B cell (primary cell): ENCODE measurements at regions of chr11 and their contacts with region 1.

Region 1: DNA sequence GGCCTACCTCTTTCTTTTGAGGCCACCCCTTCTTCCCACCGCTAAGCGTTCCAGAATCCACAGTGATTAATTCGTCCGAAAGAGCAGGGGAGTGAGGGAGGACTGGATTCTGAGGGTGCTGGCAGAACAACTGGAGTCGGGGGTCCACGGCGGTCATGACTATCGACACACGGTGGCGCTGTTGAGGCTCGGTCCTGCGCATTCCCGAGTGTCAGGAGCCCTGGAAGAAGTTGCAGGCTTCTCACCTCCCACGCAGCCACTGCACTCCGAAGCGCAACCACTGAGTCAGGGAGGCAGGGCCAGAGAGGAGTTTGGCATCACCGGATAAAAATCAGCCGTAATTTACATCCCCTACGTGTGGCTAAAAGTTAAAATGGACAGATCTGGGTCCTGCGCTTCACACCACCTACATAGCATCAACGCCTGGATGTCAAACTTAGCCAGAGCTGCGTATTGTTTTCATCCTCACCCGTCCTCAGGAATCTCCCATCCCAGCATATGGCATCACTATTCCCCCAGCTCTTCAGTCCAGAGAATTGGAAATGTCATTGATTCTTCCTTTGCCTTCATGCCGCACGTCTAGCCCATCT is 10.7 kb upstream of the CTSF start:
- DNase-seq: peak; percentile 85
- ATAC-seq: peak; percentile 91
- H3K4me3 ChIP-seq: peak overlapping the region in 2 of 5 experiments; percentile 1 to 12
- H3K4me3 Mint-ChIP-seq: peak overlapping the region; percentile 18
- H3K27ac ChIP-seq: no peak overlapping the region
- H3K27ac Mint-ChIP-seq: no peak overlapping the region
- H3K4me1 ChIP-seq: peaks cover 3 to 7% of the 10 kb centered on the region in 2 donors
- H3K4me1 Mint-ChIP-seq: peaks cover 8% of the 10 kb centered on the region
- H3K27me3 ChIP-seq: no peaks in the 10 kb centered on the region
- H3K27me3 Mint-ChIP-seq: peaks cover 24% of the 10 kb centered on the region
- CTCF ChIP-seq: peak; percentile 84

Region 2: GRCh38 chr11:66467028-66467659 is 112.0 kb before region 1 on chr11:
- CTCF ChIA-PET with region 1: no interaction called
- POLR2A ChIA-PET with region 1: no interaction called
- intact Hi-C with region 1: no loop called
- DNase-seq: no peak
- ATAC-seq: peak; percentile 26
- H3K4me3 ChIP-seq: peak overlapping the region; percentile 19 to 82 (median 63)
- H3K4me3 Mint-ChIP-seq: peak overlapping the region; percentile 90
- H3K27ac ChIP-seq: peak overlapping the region in 1 of 2 donors; percentile 39
- H3K27ac Mint-ChIP-seq: peak overlapping the region; percentile 59
- H3K4me1 ChIP-seq: peaks cover 33 to 39% of the 10 kb centered on the region in 2 donors
- H3K4me1 Mint-ChIP-seq: peaks cover 33% of the 10 kb centered on the region
- H3K27me3 ChIP-seq: no peaks in the 10 kb centered on the region
- H3K27me3 Mint-ChIP-seq: no peaks in the 10 kb centered on the region
- CTCF ChIP-seq: peak; percentile 70

Region 3: DNA sequence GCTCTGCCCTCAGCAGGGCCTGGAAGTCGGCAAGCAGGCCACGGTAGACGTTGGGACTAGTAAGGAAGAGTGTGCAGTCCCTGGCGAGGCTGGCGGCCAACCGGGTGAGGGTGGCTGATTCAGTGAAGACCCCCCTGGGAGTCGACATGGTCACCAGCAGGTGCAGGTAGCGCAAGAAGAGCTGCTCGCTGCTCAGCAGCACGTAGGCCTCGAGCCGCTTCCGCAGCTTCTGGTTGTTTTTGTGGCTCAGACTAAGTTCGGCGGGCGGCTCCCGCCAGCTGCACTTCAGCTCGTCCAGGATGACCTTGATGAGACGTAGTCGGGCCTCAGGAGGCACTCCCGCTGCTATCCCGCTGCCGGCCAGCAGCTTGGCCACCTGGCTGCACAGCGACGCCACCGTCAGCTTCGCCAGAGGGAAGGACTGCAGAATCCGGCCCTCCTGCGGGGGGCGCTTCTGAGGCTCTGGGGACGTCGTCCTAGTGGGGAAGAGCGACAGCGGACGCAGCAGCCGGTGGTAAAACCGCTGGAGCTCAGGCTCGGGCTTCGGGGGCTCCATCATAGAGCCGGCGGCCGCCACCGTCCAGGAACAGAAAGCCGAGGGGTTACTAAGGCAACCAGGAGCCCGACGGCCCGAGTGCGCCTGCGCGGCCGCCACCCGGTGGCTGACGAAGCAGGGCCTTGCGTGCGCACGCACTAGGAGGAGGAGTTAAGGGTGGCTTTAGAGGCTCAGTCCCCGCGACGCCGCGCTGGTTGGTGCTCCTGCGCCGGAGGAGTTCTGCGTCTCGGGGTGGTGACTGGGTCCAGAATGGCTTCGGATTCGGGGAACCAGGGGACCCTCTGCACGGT is 13.6 kb after region 1 on chr11 and contains the starts of genes CCDC87 and CCS:
- CTCF ChIA-PET with region 1: interaction called, 14 read pairs
- POLR2A ChIA-PET with region 1: no interaction called
- intact Hi-C with region 1: no loop called
- DNase-seq: peak; percentile 96
- ATAC-seq: peak; percentile 95
- H3K4me3 ChIP-seq: peak within 1 kb of the TSS; percentile 63 to 84 (median 77)
- H3K4me3 Mint-ChIP-seq: peak within 1 kb of the TSS; percentile 100
- H3K27ac ChIP-seq: peak within 1 kb of the TSS; percentile 61 to 86
- H3K27ac Mint-ChIP-seq: peak within 1 kb of the TSS; percentile 99
- H3K4me1 ChIP-seq: peaks cover 28 to 29% of the 10 kb centered on the region in 2 donors
- H3K4me1 Mint-ChIP-seq: peaks cover 40% of the 10 kb centered on the region
- H3K27me3 ChIP-seq: no peaks in the 10 kb centered on the region
- H3K27me3 Mint-ChIP-seq: no peaks in the 10 kb centered on the region
- CTCF ChIP-seq: peak; percentile 77
- total RNA-seq, gene CCDC87: 0.17 and 0.39 TPM in 2 replicates
- total RNA-seq, gene CCS: 87.8 and 98.5 TPM in 2 replicates

Region 4: GRCh38 chr11:66625041-66625751 is 46.1 kb after region 1 on chr11:
- CTCF ChIA-PET with region 1: interaction called, 11 read pairs
- POLR2A ChIA-PET with region 1: no interaction called
- intact Hi-C with region 1: no loop called
- DNase-seq: no peak
- ATAC-seq: no peak
- H3K4me3 ChIP-seq: no peak overlapping the region
- H3K4me3 Mint-ChIP-seq: no peak overlapping the region
- H3K27ac ChIP-seq: no peak overlapping the region
- H3K27ac Mint-ChIP-seq: no peak overlapping the region
- H3K4me1 ChIP-seq: peaks cover 29 to 50% of the 10 kb centered on the region in 2 donors
- H3K4me1 Mint-ChIP-seq: peaks cover 60% of the 10 kb centered on the region
- H3K27me3 ChIP-seq: no peaks in the 10 kb centered on the region
- H3K27me3 Mint-ChIP-seq: no peaks in the 10 kb centered on the region
- CTCF ChIP-seq: no peak

Region 5: DNA sequence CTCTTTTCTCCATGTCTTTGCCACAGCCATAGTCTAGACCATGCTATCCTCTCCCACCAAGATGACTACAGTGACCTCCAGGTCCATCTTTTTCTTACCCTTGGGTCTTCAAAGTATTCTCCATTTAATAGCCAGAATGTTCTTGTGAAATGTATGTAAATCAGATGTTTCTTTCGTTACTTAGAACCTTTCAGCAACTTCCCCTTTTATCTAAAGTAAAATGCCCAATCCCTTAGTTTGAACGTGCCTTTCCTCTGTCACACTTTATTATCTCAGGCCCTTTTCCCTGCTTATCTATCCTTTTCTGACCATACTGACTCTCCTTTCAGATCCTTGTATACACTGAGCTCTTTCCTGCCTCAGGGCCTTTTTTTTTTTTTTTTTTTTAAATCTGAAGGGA is 80.7 kb after region 1 on chr11:
- CTCF ChIA-PET with region 1: interaction called, 18 read pairs
- POLR2A ChIA-PET with region 1: no interaction called
- intact Hi-C with region 1: no loop called
- DNase-seq: peak; percentile 62
- ATAC-seq: no peak
- H3K4me3 ChIP-seq: peak overlapping the region in 1 of 5 experiments; percentile 36
- H3K4me3 Mint-ChIP-seq: peak overlapping the region; percentile 78
- H3K27ac ChIP-seq: peak overlapping the region; percentile 65 to 69
- H3K27ac Mint-ChIP-seq: peak overlapping the region; percentile 87
- H3K4me1 ChIP-seq: peaks cover 30 to 34% of the 10 kb centered on the region in 2 donors
- H3K4me1 Mint-ChIP-seq: peaks cover 29% of the 10 kb centered on the region
- H3K27me3 ChIP-seq: no peaks in the 10 kb centered on the region
- H3K27me3 Mint-ChIP-seq: no peaks in the 10 kb centered on the region
- CTCF ChIP-seq: no peak

Region 6: GRCh38 chr11:66720223-66720947 is 141.3 kb after region 1 on chr11:
- CTCF ChIA-PET with region 1: no interaction called
- POLR2A ChIA-PET with region 1: no interaction called
- intact Hi-C with region 1: no loop called
- DNase-seq: no peak
- ATAC-seq: no peak
- H3K4me3 ChIP-seq: no peak overlapping the region
- H3K4me3 Mint-ChIP-seq: no peak overlapping the region
- H3K27ac ChIP-seq: no peak overlapping the region
- H3K27ac Mint-ChIP-seq: no peak overlapping the region
- H3K4me1 ChIP-seq: no peaks in the 10 kb centered on the region
- H3K4me1 Mint-ChIP-seq: no peaks in the 10 kb centered on the region
- H3K27me3 ChIP-seq: peaks cover 0 to 21% (median under 1%) of the 10 kb centered on the region in 4 experiments
- H3K27me3 Mint-ChIP-seq: peaks cover 28% of the 10 kb centered on the region
- CTCF ChIP-seq: no peak

Region 7: GRCh38 chr11:66784575-66784974 is 205.5 kb after region 1 on chr11:
- CTCF ChIA-PET with region 1: no interaction called
- POLR2A ChIA-PET with region 1: no interaction called
- intact Hi-C with region 1: no loop called
- DNase-seq: no peak
- ATAC-seq: no peak
- H3K4me3 ChIP-seq: no peak overlapping the region
- H3K4me3 Mint-ChIP-seq: no peak overlapping the region
- H3K27ac ChIP-seq: no peak overlapping the region
- H3K27ac Mint-ChIP-seq: no peak overlapping the region
- H3K4me1 ChIP-seq: no peaks in the 10 kb centered on the region
- H3K4me1 Mint-ChIP-seq: peaks cover 2% of the 10 kb centered on the region
- H3K27me3 ChIP-seq: no peaks in the 10 kb centered on the region
- H3K27me3 Mint-ChIP-seq: no peaks in the 10 kb centered on the region
- CTCF ChIP-seq: no peak